Endothelial cell of umbilical vein (primary cell): ENCODE measurements at regions of chr5 and their contacts with region 1.

Region 1: DNA sequence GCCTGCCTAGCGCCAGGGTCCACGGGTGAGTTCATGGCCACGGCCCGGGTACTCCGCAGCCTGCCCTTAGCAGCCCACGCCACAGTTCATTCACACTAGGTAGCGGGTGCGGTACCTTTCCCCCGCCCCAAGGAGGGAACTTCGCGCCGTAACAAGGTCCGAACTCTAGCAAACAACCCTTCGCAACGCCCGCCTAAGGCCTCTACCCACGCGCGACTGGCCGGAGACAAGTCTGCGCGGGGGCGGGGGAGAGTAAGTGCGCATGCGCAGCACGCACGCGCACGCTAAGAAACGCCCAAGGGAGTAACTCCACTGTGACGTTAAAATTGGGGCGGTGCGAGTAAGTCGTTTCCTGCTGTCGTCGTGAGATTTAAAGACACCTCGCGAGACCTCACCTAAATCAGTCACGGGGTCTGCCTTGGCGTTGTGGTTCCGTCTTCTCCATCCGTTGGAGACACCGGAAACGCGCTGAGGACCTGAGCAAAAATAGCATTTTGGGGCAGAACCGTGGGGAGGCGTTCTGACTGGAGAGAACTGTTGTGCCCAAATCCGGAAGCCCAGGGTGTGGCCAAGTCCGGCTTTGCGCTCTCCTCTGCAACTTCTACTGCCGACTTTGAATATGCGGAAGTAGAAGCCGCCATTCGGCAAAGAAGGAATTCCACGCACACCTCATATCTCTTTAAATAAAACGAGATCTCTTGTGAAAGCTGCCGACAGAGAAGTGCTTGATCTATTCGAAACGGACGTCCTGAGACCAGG is at the start of gene RAPGEF6:
- DNase-seq: peak; percentile 99
- H3K4me3 ChIP-seq: peak within 1 kb of the TSS; percentile 52 to 82 (median 56)
- H3K27ac ChIP-seq: peak within 1 kb of the TSS; percentile 95
- H3K4me1 ChIP-seq: peaks cover 16% of the 10 kb centered on the region
- H3K27me3 ChIP-seq: no peaks in the 10 kb centered on the region
- CTCF ChIP-seq: peak in 1 of 2 donors; percentile 3
- POLR2A ChIP-seq: peak; percentile 76
- total RNA-seq, gene RAPGEF6: 13.9 and 17.5 TPM in 2 replicates

Region 2: GRCh38 chr5:130496215-130496614 is 1139.0 kb before region 1 on chr5:
- CTCF ChIA-PET with region 1: no interaction called
- POLR2A ChIA-PET with region 1: no interaction called
- dilution Hi-C with region 1: no loop called
- intact Hi-C with region 1: no loop called
- DNase-seq: no peak
- H3K4me3 ChIP-seq: no peak overlapping the region
- H3K27ac ChIP-seq: no peak overlapping the region
- H3K4me1 ChIP-seq: no peaks in the 10 kb centered on the region
- H3K27me3 ChIP-seq: no peaks in the 10 kb centered on the region
- CTCF ChIP-seq: no peak
- POLR2A ChIP-seq: no peak

Region 3: DNA sequence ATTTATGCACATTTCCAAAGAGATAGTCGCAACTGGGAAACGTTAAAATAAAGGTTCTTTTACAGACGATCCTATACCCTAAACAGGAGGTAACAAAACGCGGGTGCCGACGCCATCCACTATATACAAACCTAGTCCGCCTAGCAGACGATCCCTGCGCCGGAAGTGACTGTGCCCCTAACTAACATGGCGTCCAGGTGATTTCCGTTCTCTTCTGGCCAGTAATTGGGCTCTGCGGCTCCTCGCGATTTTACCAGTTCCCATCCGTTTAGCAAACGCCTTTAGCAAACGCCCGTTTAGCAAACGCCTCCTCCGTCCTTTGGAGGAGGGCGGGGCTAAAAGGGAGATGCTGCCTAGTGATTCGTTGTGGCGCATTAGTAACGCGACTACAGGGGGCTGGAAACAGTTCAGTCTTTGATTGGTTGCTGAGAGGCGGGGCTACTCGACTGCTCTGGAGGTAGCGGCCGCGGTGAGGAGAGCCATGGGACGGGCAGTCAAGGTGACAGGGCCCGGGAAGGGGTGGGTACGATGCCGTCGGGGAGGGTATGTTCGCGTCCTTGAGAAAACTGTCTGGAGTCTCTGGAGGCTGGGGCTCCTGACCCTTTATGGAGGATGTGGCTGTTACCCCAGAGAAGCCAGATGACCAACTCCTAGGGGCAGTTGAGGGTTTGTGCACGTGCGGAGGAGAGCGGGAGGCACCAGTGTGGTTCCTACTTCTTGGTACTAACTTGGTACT is 464.5 kb before region 1 on chr5 and contains the start of gene LYRM7:
- CTCF ChIA-PET with region 1: no interaction called
- POLR2A ChIA-PET with region 1: no interaction called
- dilution Hi-C with region 1: no loop called
- intact Hi-C with region 1: loop called (anchors 5 kb)
- DNase-seq: peak; percentile 99
- H3K4me3 ChIP-seq: peak within 1 kb of the TSS; percentile 38 to 81 (median 48)
- H3K27ac ChIP-seq: peak within 1 kb of the TSS; percentile 6
- H3K4me1 ChIP-seq: peaks cover 12% of the 10 kb centered on the region
- H3K27me3 ChIP-seq: no peaks in the 10 kb centered on the region
- CTCF ChIP-seq: no peak
- POLR2A ChIP-seq: peak; percentile 89
- total RNA-seq, gene LYRM7: 5.5 and 7.5 TPM in 2 replicates

Region 4: DNA sequence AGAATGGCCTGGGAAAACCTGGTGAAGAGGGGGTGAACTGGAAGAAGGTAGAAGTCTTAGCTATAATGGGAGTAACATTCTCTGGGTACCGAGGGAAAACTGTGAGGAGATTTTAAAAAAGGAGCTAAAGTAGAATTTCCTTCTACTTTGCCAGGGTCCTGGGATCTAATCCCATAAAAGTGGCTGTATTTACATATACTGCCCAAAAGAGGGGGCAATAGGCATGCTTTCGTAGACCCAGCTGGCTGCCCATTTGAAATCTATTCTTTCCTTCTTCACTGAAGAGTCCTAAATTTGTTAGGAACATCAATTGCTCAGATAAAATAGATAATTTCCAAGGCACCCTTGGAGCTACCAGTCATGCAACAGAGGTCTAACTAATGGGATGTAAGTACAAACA is 212.1 kb before region 1 on chr5:
- CTCF ChIA-PET with region 1: interaction called, 3 read pairs
- POLR2A ChIA-PET with region 1: no interaction called
- dilution Hi-C with region 1: no loop called
- intact Hi-C with region 1: loop called (anchors 1 kb)
- DNase-seq: peak; percentile 46
- H3K4me3 ChIP-seq: no peak overlapping the region
- H3K27ac ChIP-seq: no peak overlapping the region
- H3K4me1 ChIP-seq: no peaks in the 10 kb centered on the region
- H3K27me3 ChIP-seq: no peaks in the 10 kb centered on the region
- CTCF ChIP-seq: peak; percentile 47 to 56
- POLR2A ChIP-seq: no peak

Region 5: DNA sequence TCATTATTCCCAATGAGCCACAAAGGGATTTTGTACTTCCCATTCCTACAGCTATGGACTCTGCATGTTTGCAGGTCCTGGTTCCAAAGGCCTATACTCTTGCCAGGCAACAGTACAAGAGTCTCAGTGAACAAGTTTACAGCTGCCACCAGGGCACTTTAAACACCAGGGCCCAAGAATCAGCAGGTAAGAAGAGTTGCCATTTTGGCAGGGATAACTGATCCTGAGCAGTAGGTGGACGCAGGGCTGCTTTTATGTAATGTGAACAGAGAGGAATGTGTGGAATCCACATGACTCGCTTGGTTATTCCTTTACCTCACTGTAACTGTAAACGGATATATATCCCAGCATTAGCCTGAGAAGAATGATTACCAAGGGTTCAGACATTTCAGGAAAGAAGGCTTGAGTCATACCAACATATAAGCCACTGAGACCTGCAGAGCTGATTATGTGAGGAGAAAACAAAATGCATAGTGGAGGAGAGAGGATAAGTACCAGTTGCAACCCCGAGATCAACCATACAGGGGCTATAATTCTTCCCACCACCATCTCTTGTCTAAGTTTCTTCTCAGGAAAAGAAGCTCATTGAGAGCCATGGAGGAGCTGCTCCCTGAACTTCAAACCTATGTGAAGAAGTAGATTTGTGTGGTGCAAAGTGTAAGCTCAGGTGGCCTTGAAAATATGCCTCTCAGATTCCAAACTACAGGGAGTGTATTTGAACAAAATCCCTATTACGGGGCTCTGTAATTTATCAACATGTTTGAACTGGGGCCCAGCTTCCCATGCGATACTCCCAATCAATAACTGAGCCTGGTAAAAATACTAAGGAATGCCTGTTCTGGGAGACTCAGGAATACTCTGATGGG is 24.7 kb before region 1 on chr5:
- CTCF ChIA-PET with region 1: interaction called, 3 read pairs
- POLR2A ChIA-PET with region 1: interaction called, 5 read pairs
- dilution Hi-C with region 1: no loop called
- intact Hi-C with region 1: loop called (anchors 1 kb)
- DNase-seq: peak; percentile 87
- H3K4me3 ChIP-seq: no peak overlapping the region
- H3K27ac ChIP-seq: peak overlapping the region; percentile 68
- H3K4me1 ChIP-seq: peaks cover 13% of the 10 kb centered on the region
- H3K27me3 ChIP-seq: no peaks in the 10 kb centered on the region
- CTCF ChIP-seq: no peak
- POLR2A ChIP-seq: no peak